CD8-positive, alpha-beta T cell (primary cell): ENCODE measurements at regions of chr19 and their contacts with region 1.

Region 1: DNA sequence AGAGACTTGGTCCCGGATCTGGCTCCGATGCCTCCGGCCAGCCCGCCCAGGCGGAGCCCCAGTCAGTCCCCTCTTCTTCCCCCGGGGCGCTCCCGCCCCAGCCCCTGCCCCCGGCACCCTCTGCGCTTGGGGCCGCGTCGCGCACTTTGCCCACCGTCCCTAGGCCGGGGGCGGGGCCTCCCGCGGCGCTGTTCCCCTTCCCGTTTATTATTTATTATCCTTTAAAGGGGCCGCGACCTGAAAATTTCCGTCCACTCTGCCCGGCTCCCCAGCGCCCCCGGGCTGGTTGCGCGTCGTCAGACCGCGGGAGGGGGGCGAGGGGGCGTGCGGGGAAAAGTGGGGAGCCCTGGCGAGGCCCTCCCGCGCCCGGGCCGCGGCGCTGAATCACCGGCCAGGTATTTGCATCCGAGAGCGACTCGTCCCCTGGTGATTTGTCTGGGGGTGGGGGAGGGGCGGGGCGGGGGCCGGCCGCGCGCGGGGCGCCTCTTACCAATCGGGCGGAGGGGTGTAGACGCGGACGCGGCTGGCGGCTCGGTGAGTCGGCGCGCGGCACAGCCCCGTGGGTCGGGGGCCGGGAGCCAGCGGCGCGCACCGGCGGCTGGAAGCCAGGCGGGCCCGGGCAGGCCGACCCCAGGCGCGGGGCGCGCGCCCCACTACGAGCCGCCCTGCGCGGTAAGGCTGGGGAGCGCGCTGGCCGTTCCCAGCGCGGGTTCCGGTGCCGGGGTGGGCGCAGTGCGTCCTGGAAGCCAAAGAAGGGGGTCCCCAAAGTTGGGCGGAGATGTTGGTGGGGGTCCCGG is at the start of gene ARID3A:
- DNase-seq: peak in 8 of 9 experiments; percentile 62 to 88 (median 76)
- ATAC-seq: peak; percentile 67
- H3K4me3 ChIP-seq: peak within 1 kb of the TSS; percentile 73 to 78
- H3K4me3 Mint-ChIP-seq: peak within 1 kb of the TSS; percentile 80
- H3K27ac ChIP-seq: peak within 1 kb of the TSS; percentile 42 to 74
- H3K27ac Mint-ChIP-seq: no peak within 1 kb of the TSS
- H3K4me1 ChIP-seq: peaks cover 20% of the 10 kb centered on the region
- H3K4me1 Mint-ChIP-seq: peaks cover 17% of the 10 kb centered on the region
- H3K27me3 ChIP-seq: no peaks in the 10 kb centered on the region
- H3K27me3 Mint-ChIP-seq: no peaks in the 10 kb centered on the region
- CTCF ChIP-seq: no peak
- total RNA-seq, gene ARID3A: 2.0 to 2.7 TPM

Region 2: GRCh38 chr19:886429-886828 is 39.3 kb before region 1 on chr19:
- CTCF ChIA-PET with region 1: no interaction called
- POLR2A ChIA-PET with region 1: no interaction called
- intact Hi-C with region 1: no loop called
- DNase-seq: no peak
- ATAC-seq: no peak
- H3K4me3 ChIP-seq: no peak overlapping the region
- H3K4me3 Mint-ChIP-seq: no peak overlapping the region
- H3K27ac ChIP-seq: no peak overlapping the region
- H3K27ac Mint-ChIP-seq: no peak overlapping the region
- H3K4me1 ChIP-seq: no peaks in the 10 kb centered on the region
- H3K4me1 Mint-ChIP-seq: peaks cover 22% of the 10 kb centered on the region
- H3K27me3 ChIP-seq: no peaks in the 10 kb centered on the region
- H3K27me3 Mint-ChIP-seq: no peaks in the 10 kb centered on the region
- CTCF ChIP-seq: no peak

Region 3: DNA sequence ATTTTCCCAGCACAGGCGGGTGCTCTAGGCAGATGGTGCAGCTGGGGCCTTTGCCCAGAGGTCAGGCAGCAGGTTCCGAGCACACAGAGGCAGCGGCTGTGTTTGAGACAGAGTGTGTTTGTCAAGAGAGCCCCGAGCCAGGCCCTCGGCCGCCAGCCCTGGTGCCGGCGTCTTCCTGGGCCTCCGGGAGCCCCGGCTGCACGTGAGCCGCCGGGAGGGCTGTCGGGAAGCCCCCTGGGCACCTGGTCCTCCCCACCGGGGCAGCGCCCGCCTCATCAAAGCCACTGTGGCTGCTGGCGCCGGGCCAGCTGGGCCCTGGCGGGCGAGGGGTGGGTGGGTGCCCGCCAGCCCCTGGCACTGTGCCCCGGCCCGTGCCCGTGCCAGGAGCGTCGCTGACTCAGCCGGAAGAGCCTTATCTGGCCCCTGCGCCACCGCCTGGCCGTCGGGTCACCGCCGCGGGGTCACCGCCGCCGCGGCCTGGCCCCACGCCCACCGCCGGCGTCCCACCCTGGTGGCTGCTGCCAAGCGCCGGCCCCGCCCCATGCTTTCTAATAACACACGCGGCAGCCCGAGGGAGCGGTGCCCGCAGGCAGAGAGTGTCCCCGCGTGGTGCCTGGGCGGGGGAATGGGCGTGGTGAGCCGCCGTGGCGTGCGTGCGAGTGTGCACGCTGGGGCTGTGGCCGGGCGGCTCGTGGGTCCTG is 15.0 kb after region 1 on chr19:
- CTCF ChIA-PET with region 1: interaction called, 6 read pairs
- POLR2A ChIA-PET with region 1: no interaction called
- intact Hi-C with region 1: loop called (anchors 1 to 2 kb)
- DNase-seq: peak; percentile 41 to 94 (median 78)
- ATAC-seq: peak; percentile 70
- H3K4me3 ChIP-seq: peak overlapping the region; percentile 36 to 53
- H3K4me3 Mint-ChIP-seq: peak overlapping the region; percentile 78
- H3K27ac ChIP-seq: peak overlapping the region; percentile 7 to 11
- H3K27ac Mint-ChIP-seq: no peak overlapping the region
- H3K4me1 ChIP-seq: peaks cover 33% of the 10 kb centered on the region
- H3K4me1 Mint-ChIP-seq: peaks cover 24% of the 10 kb centered on the region
- H3K27me3 ChIP-seq: no peaks in the 10 kb centered on the region
- H3K27me3 Mint-ChIP-seq: no peaks in the 10 kb centered on the region
- CTCF ChIP-seq: no peak

Region 4: DNA sequence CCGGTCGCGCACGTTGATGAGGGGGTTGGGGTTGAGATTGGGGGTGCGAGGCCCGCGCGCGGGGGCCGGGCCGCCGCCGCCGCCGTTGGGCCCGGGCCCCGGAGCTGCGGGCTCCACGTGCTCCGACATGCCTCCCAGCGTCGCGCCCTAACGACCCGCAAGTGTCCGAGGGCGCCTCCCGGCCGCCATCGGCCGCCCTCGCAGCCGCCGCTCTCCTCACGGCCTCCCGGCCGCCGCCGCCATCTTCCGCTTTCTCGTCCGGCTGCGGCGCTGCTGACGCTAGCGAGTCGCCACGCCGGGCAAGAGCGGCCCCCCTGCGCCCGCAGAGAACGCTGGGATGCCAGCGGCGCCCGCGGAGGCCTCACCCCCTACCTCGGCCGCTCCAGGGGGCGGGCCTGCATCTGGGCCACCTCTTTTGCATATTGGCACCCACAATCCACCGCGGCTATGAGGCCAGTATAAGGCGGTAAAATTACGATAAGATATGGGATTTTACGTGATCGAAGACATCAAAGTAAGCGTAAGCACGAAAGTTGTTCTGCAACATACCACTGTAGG is 95.2 kb after region 1 on chr19 and contains the start of gene TMEM259:
- CTCF ChIA-PET with region 1: interaction called, 3 read pairs
- POLR2A ChIA-PET with region 1: no interaction called
- intact Hi-C with region 1: loop called in 1 of 2 experiments (anchors 5 kb)
- DNase-seq: peak; percentile 94 to 98 (median 98)
- ATAC-seq: peak; percentile 86
- H3K4me3 ChIP-seq: peak within 1 kb of the TSS; percentile 89 to 94
- H3K4me3 Mint-ChIP-seq: peak within 1 kb of the TSS; percentile 90
- H3K27ac ChIP-seq: peak within 1 kb of the TSS; percentile 97 to 99
- H3K27ac Mint-ChIP-seq: peak within 1 kb of the TSS; percentile 100
- H3K4me1 ChIP-seq: peaks cover 43% of the 10 kb centered on the region
- H3K4me1 Mint-ChIP-seq: peaks cover 45% of the 10 kb centered on the region
- H3K27me3 ChIP-seq: no peaks in the 10 kb centered on the region
- H3K27me3 Mint-ChIP-seq: no peaks in the 10 kb centered on the region
- CTCF ChIP-seq: no peak
- total RNA-seq, gene TMEM259: 408 to 443 TPM

Region 5: GRCh38 chr19:1082172-1082927 is 156.6 kb after region 1 on chr19:
- CTCF ChIA-PET with region 1: no interaction called
- POLR2A ChIA-PET with region 1: no interaction called
- intact Hi-C with region 1: loop called in 1 of 2 experiments (anchors 10 kb)
- DNase-seq: peak; percentile 75 to 94 (median 84)
- ATAC-seq: peak; percentile 76
- H3K4me3 ChIP-seq: no peak overlapping the region
- H3K4me3 Mint-ChIP-seq: peak overlapping the region; percentile 55
- H3K27ac ChIP-seq: peak overlapping the region; percentile 42 to 54
- H3K27ac Mint-ChIP-seq: peak overlapping the region; percentile 82
- H3K4me1 ChIP-seq: peaks cover 84% of the 10 kb centered on the region
- H3K4me1 Mint-ChIP-seq: peaks cover 40% of the 10 kb centered on the region
- H3K27me3 ChIP-seq: no peaks in the 10 kb centered on the region
- H3K27me3 Mint-ChIP-seq: no peaks in the 10 kb centered on the region
- CTCF ChIP-seq: no peak